GM10248 (cell line): ENCODE measurements at regions of chr6 and their contacts with region 1.

Region 1: DNA sequence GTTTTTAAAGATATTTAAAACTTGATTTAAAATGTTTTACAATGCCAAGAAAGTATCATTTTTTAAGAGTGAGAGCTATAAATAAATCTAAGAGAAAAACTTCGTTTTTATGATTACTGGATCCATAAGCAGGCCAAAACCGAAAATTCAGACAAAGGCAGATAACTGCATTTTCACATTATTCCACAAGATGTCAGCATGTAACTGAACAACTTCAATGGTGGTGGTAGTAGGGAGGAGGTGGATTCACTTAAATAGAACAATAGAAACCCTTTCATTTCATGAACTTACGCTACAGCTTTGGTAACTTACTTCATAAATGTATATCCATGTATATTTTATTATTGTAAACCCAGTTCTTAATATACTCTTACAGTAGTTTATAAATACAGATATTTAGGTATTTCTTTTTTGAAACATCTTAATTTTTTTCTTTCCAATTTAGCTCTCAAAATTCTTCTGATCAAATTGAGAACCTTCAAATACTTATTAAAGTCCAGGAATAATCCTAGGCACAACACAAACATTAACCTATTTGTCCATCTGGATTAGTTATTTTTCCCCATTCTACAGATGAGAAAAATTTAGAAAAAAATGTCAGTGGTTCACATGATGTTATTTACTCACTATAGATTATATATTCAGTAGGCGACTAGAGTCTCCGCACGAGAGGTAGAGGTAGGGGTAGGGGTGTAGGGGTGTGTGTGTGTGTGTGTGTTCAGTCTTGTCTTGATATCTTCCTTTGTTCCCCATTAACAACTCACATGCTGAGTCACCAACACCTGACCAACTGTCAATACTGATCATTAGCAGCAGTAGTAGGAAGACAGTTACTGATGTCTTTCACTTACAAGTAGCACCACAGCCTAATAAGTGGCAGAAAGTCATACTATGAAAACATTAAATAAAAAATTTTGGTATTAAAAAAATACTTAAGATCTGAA is 111.5 kb downstream of the ARHGAP18 start:
- DNase-seq: peak; percentile 55
- CTCF ChIP-seq: peak; percentile 79

Region 2: GRCh38 chr6:129490521-129491245 is 107.8 kb before region 1 on chr6:
- CTCF ChIA-PET with region 1: interaction called, 10 read pairs
- POLR2A ChIA-PET with region 1: no interaction called
- DNase-seq: peak; percentile 62
- CTCF ChIP-seq: no peak

Region 3: GRCh38 chr6:129661536-129662405 is 63.3 kb after region 1 on chr6:
- CTCF ChIA-PET with region 1: interaction called, 21 read pairs
- POLR2A ChIA-PET with region 1: no interaction called
- DNase-seq: no peak
- CTCF ChIP-seq: no peak

Region 4: DNA sequence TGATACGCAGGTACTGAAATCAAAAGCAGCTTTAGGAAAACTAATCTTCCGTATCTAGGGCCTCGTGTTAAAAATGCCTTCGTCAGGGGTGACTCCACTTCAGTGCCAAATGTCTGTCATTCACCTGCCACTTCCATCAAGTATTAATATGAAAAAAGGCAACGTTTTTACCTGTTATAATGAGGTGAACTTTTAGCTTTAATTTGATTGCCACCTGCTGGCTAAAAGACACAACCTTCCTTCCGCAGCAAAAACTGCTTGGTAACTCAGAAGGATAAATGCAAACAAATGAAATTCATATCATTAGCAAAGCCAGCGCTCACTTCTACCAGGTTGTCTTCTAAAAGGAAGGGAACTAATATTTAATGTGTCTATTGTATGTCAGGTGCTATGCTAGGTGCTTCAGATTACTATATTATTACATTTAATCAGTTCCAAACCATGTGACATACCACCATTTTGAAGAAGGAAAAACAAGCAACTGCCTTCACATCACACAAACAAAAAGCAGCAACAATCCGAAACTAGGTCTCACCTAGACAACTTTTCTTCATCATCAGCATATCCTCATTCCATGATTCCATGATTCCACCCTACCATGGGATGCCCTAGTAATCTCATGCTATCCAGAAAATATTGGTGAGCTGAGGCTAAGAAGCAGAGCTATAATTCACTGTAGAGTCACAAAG is 132.1 kb after region 1 on chr6:
- CTCF ChIA-PET with region 1: interaction called, 200 read pairs
- POLR2A ChIA-PET with region 1: no interaction called
- DNase-seq: peak; percentile 45
- CTCF ChIP-seq: peak; percentile 76

Region 5: DNA sequence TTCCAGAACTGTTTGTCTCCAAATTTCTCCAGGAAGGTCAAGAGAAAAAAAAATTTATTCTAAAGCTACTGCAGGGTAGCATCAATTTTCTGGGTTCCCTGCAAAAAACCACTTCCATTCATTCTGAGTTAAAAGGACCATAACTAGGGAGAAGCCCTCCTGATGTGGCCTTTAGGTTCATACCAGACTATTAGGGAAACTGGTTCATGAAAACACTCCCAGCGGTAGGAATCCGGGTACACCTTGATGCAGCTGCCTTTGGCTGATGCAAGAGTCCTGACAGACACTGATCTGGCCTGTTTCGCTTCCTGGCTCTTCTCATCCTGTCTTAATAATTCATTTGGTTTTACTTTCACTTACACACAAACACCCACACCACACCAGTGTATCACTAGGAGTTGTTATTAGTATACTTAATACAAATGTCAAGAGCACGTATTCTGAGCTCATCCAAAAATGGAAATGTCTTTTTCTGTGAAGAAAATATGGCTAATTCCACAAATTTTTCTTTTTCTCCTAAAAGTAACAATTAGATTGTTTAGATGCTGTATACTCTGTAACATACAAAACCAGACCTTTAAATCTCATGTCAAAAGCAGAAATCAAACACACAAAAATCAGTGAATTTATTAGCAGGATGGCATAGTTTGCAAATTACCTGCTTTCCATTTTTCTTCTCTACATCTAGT is 149.8 kb after region 1 on chr6:
- CTCF ChIA-PET with region 1: interaction called, 20 read pairs
- POLR2A ChIA-PET with region 1: no interaction called
- DNase-seq: peak; percentile 59
- CTCF ChIP-seq: no peak

Region 6: DNA sequence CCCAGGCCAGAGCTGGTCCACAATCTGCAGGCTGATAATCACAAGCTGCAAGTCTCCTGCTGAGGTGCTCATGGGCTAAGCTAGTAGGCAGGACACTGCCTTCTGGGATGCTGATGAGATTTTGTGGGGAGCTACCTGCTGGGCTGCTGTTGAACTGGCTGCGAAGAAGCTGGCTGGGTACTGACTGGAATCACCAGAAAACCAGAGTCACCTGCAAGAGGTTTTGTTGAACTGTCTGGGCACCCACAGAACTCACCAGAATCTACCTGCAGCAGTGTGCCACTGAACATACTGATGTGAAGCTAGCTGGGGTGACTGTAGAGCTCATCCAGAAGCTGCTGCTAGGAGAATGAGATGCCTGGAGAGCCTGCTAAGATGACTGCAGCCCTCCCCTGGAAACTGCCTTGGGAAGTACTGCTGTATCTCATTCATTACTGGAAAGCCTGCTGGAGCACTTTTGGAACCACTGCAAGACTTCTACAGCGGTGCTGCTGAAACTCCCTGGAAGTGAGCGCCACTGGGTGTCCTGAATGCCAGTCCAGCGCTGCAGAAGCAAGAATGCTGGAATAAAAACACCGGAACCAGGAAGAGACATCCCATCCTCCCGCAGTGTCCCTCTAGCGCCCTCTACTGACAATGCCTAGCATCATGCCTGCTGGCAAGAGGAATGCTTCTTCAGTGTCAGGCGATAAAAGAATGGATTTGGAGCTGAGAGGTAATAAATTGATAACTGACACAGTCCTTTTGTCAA is 176.4 kb after region 1 on chr6:
- CTCF ChIA-PET with region 1: interaction called, 16 read pairs
- POLR2A ChIA-PET with region 1: no interaction called
- DNase-seq: peak; percentile 34
- CTCF ChIP-seq: peak; percentile 64

Region 7: GRCh38 chr6:130020907-130021629 is 422.6 kb after region 1 on chr6:
- CTCF ChIA-PET with region 1: interaction called, 11 read pairs
- POLR2A ChIA-PET with region 1: no interaction called
- DNase-seq: peak; percentile 65
- CTCF ChIP-seq: peak; percentile 85